ENCODE measurements at regions of chr15 and their contacts with region 1.

Region 1: GRCh38 chr15:32790352-32790999 is 72.7 kb downstream of the GREM1 start:
- DNase-seq: no peak
- H3K4me3 ChIP-seq: no peak overlapping the region
- H3K27ac ChIP-seq: no peak overlapping the region
- H3K4me1 ChIP-seq: no peaks in the 10 kb centered on the region
- H3K27me3 ChIP-seq: no peaks in the 10 kb centered on the region
- CTCF ChIP-seq: no peak

Region 2: DNA sequence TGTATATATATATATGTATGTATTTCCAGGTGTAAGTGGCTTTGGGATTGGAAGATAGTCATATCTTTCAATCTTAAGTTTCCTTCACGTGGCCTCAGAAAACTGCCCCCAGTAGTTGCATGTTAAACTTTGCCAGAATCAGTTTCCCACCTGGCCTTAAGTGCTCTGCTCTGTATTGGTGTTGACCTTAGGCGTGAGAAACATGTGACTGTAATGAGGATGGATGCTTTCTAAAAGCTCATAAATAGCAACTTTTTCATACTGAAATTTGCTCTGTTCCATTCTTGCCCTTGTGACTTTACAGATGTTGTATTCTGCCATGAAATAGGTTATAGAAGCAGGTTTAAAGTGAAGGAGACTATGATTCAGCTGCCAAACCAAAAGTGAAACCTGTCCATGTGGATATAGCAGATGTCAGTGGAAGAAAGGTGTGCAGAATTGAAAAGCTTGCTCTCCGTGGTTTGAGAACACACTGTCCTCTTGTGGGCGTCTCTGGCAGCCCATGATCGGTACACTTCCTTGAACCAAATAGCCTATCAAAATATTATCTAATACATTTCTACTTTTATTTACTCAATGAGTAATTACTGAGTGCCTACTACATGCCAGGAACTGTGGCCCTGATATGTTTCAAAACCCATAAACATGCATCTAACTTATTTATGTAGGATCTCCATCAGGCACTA is 133.1 kb before region 1 on chr15:
- intact Hi-C with region 1: no loop called
- DNase-seq: no peak
- H3K4me3 ChIP-seq: no peak overlapping the region
- H3K27ac ChIP-seq: no peak overlapping the region
- H3K4me1 ChIP-seq: no peaks in the 10 kb centered on the region
- H3K27me3 ChIP-seq: no peaks in the 10 kb centered on the region
- CTCF ChIP-seq: peak; percentile 19

Region 3: DNA sequence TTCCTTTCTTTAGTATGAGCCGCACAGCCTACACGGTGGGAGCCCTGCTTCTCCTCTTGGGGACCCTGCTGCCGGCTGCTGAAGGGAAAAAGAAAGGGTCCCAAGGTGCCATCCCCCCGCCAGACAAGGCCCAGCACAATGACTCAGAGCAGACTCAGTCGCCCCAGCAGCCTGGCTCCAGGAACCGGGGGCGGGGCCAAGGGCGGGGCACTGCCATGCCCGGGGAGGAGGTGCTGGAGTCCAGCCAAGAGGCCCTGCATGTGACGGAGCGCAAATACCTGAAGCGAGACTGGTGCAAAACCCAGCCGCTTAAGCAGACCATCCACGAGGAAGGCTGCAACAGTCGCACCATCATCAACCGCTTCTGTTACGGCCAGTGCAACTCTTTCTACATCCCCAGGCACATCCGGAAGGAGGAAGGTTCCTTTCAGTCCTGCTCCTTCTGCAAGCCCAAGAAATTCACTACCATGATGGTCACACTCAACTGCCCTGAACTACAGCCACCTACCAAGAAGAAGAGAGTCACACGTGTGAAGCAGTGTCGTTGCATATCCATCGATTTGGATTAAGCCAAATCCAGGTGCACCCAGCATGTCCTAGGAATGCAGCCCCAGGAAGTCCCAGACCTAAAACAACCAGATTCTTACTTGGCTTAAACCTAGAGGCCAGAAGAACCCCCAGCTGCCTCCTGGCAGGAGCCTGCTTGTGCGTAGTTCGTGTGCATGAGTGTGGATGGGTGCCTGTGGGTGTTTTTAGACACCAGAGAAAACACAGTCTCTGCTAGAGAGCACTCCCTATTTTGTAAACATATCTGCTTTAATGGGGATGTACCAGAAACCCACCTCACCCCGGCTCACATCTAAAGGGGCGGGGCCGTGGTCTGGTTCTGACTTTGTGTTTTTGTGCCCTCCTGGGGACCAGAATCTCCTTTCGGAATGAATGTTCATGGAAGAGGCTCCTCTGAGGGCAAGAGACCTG is 59.5 kb before region 1 on chr15:
- intact Hi-C with region 1: loop called (anchors 10 kb)
- DNase-seq: peak; percentile 94
- H3K4me3 ChIP-seq: no peak overlapping the region
- H3K27ac ChIP-seq: no peak overlapping the region
- H3K4me1 ChIP-seq: no peaks in the 10 kb centered on the region
- H3K27me3 ChIP-seq: no peaks in the 10 kb centered on the region
- CTCF ChIP-seq: no peak

Region 4: GRCh38 chr15:32888221-32888761 is 97.8 kb after region 1 on chr15:
- intact Hi-C with region 1: no loop called
- DNase-seq: no peak
- H3K4me3 ChIP-seq: no peak overlapping the region
- H3K27ac ChIP-seq: no peak overlapping the region
- H3K4me1 ChIP-seq: no peaks in the 10 kb centered on the region
- H3K27me3 ChIP-seq: no peaks in the 10 kb centered on the region
- CTCF ChIP-seq: no peak

Region 5: DNA sequence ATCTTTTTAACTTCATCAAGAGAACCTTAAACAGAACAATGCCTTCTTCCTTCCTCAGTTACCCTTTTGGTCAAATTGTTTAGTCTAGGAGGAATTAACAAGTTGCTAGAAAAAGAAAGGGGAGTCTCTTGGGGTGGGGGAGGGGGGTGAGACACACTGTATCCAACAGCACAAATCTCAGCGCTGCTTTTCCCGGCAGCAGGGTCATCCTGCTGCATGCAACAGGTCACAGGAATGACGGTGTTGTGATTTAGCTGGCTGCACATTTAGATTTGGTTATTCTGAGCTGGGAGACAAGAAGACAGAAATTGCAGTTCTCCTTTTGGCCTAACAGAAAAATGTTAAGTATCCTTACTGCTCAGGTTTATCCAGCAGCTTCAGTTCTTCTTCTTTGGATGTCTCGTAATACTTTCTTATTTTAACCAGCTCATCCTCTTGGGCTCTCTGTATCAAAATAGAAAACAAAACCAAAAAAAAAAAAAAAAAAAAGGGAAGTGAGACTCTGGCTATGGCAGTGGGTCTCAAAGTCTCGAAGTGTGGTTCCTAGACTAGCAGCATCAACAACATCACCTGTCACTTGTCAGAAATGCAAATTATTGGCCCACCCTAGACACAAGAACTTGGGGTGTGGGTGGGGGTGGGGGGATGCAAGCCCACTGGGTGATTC is 117.8 kb after region 1 on chr15:
- intact Hi-C with region 1: no loop called
- DNase-seq: no peak
- H3K4me3 ChIP-seq: no peak overlapping the region
- H3K27ac ChIP-seq: no peak overlapping the region
- H3K4me1 ChIP-seq: no peaks in the 10 kb centered on the region
- H3K27me3 ChIP-seq: no peaks in the 10 kb centered on the region
- CTCF ChIP-seq: no peak

Measured in colonic mucosa (tissue), 4 donors.